ENCODE measurements at regions of chr5 and their contacts with region 1.

Region 1: DNA sequence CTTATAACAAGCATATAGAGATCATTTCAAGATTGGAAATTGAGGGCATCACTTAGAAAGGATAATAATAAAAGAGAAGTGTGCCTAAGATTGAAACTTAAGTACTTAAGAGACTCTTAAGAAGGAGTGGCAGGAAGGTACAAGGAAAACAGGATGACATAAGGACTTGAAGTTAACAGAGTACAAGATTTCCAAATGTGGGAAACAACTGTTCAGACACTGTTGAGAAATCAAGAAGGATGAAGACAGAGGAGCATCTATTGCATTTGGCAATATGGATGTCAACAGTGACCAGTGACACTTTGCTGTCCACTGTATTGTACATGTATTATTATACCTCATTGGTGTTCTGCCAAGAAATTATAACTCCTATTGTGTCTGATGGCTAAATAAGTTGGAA is 157.8 kb upstream of the PTGER4 start:
- DNase-seq: no peak
- H3K4me3 ChIP-seq: no peak overlapping the region
- H3K4me3 Mint-ChIP-seq: no peak overlapping the region
- H3K27ac ChIP-seq: no peak overlapping the region
- H3K27ac Mint-ChIP-seq: no peak overlapping the region
- H3K4me1 ChIP-seq: no peaks in the 10 kb centered on the region
- H3K4me1 Mint-ChIP-seq: no peaks in the 10 kb centered on the region
- H3K27me3 ChIP-seq: no peaks in the 10 kb centered on the region
- H3K27me3 Mint-ChIP-seq: peaks cover 0 to 1% of the 10 kb centered on the region in 2 donors

Region 2: GRCh38 chr5:40502736-40503135 is 19.2 kb before region 1 on chr5:
- CTCF ChIA-PET with region 1: no interaction called
- POLR2A ChIA-PET with region 1: no interaction called
- DNase-seq: no peak
- H3K4me3 ChIP-seq: no peak overlapping the region
- H3K4me3 Mint-ChIP-seq: no peak overlapping the region
- H3K27ac ChIP-seq: no peak overlapping the region
- H3K27ac Mint-ChIP-seq: no peak overlapping the region
- H3K4me1 ChIP-seq: no peaks in the 10 kb centered on the region
- H3K4me1 Mint-ChIP-seq: peaks cover 7 to 11% (median 10%) of the 10 kb centered on the region in 3 donors
- H3K27me3 ChIP-seq: no peaks in the 10 kb centered on the region
- H3K27me3 Mint-ChIP-seq: no peaks in the 10 kb centered on the region

Region 3: GRCh38 chr5:40549616-40550015 is 27.7 kb after region 1 on chr5:
- CTCF ChIA-PET with region 1: no interaction called
- POLR2A ChIA-PET with region 1: interaction called, 13 read pairs
- DNase-seq: no peak
- H3K4me3 ChIP-seq: no peak overlapping the region
- H3K4me3 Mint-ChIP-seq: no peak overlapping the region
- H3K27ac ChIP-seq: no peak overlapping the region
- H3K27ac Mint-ChIP-seq: no peak overlapping the region
- H3K4me1 ChIP-seq: no peaks in the 10 kb centered on the region
- H3K4me1 Mint-ChIP-seq: peaks cover 0 to 9% (median 0%) of the 10 kb centered on the region in 3 donors
- H3K27me3 ChIP-seq: no peaks in the 10 kb centered on the region
- H3K27me3 Mint-ChIP-seq: no peaks in the 10 kb centered on the region

Measured in CD8-positive, alpha-beta memory T cell (primary cell).